ENCODE measurements at regions of chr2 and their contacts with region 1.

Region 1: DNA sequence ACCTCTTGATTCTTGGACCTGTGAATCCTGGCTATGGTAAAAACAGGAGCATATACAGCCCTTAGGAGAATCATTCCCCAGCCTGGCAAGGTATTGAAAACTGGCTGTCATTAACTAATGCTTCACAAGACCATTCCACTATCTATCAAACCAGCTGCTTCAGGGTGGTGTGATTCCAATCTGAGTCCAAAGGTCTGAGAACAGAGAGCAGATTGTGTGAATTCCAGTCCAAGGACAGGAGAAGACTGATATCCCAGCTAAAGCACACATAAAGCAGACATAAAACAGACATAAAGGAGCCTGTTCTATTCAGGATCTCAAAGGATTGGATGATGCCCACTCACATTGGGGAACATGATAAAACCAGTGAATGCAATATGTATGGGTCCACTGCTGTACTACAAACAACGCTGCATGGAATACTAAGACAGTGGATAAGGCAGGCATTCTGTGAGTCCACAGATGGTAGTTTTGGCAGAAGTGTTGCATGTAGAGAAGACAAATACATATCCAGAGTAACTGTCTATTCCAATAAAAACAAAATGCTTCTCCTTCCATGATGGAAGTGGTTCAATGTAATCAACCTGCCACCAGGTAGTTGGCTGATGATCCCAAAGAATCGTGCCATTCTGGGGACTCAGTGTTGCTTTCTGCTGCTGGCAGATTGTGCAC is 363.9 kb downstream of the KCNJ3 start:
- DNase-seq: no peak
- H3K4me3 ChIP-seq: no peak overlapping the region
- H3K27ac ChIP-seq: no peak overlapping the region
- H3K4me1 ChIP-seq: no peaks in the 10 kb centered on the region
- H3K27me3 ChIP-seq: no peaks in the 10 kb centered on the region
- CTCF ChIP-seq: no peak

Region 2: DNA sequence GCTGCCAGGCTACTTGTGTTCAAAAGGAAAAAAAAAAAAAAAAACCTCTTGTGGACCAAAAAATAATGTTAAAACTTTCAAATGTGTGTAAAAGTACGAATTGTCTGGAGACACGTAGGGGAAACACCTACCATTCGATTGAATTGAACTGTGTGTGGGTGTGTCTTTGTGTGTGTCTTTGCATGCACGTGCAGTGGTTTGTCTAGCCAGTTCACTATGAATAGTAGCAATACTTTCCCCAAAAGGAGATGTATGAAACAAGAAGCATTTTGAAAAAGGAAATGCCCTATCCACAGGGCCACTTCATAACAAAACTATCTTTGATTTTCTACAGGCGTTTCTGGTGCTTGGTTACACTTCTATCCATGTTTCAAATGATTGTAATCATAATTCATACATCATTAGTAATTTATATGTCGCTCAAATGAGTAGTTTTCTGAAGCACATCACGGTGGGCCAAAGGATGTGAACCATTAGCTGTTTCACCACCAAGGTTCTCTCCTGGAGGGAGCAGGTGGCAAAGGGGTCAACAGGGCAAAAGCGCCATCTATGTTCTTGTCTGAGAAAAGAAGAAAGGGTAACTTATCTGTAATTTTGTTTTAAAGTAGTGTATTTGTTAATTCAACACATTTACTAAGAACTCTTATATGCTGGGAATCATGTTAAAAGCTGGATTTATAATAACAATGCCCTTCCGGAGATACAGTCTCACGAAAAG is 1770.5 kb before region 1 on chr2:
- intact Hi-C with region 1: loop called (anchors 5 kb)
- DNase-seq: no peak
- H3K4me3 ChIP-seq: no peak overlapping the region
- H3K27ac ChIP-seq: no peak overlapping the region
- H3K4me1 ChIP-seq: no peaks in the 10 kb centered on the region
- H3K27me3 ChIP-seq: no peaks in the 10 kb centered on the region
- CTCF ChIP-seq: no peak

Region 3: DNA sequence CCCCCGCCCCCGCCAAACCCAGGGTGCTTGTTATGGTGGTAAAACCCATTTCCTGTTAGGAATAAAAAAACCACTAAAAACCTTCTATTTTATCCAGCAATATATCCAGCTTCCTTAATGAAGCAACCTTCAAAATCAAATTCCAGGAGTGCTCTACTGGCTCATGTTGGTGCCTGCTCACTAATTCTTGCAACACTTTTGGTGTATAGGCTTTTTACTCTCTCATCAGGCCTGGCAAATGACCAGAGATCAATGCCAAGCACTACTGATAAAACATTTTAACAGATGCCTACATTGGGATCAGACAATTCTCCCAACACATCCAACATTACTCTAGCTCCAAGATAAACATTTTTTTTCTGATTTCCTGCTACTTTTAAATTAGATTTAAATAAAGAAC is 51.5 kb before region 1 on chr2:
- intact Hi-C with region 1: no loop called
- DNase-seq: no peak
- H3K4me3 ChIP-seq: no peak overlapping the region
- H3K27ac ChIP-seq: no peak overlapping the region
- H3K4me1 ChIP-seq: no peaks in the 10 kb centered on the region
- H3K27me3 ChIP-seq: no peaks in the 10 kb centered on the region
- CTCF ChIP-seq: no peak

Measured in tibial artery (tissue), 4 donors.